ENCODE measurements at regions of chr16 and their contacts with region 1.

Region 1: DNA sequence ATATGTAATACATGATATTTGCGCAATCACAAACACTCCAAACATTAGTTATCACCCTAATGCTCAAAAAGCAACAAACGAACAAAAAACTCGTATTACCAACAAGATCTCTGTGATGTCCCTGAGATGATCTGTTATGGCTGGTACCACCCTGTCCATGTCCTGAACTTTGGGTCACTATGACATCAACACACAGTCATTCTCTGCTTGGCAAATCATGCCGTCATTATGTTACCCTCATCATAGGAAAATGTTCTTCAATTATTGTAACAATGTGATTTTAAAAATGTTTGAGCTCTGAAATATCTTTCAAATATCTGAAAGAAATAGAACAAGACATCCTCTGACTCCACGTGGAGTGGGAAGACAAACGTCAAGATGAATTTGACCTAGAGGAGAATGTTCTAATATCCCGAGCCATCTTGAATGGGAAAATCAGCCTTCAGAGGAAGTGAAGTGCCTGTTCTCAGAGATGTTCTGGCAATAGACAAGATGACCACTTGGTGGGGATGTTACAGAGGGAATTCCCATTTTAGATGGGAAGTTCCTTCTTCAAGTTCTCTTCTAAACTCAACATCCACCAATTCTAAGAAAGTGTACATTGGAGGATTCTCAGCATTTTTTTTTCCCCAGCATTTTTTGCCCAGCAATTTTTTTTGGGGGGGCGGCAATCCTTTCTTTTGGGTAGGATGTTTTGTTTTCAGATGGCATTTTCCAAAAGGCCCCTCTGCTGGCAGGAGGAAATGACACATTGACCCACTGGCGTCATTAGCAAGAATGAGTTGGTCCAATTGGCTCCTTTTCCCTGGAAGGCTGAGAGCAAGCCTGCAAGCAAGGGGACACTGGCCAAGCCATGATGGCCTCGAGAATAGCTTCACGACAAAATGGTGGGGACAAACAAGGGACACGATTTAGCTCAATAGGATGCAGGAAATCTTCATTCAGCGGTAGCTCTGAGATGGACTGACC is 3.7 kb upstream of the HSD17B2 start:
- DNase-seq: peak; percentile 71
- ATAC-seq: no peak
- H3K4me3 ChIP-seq: no peak overlapping the region
- H3K27ac ChIP-seq: peak overlapping the region; percentile 37; the same call in 1 of the 2 replicates
- H3K4me1 ChIP-seq: peaks cover 34% of the 10 kb centered on the region
- H3K27me3 ChIP-seq: peaks cover 1% of the 10 kb centered on the region; the same call in 1 of the 2 replicates
- CTCF ChIP-seq: peak; percentile 74

Region 2: DNA sequence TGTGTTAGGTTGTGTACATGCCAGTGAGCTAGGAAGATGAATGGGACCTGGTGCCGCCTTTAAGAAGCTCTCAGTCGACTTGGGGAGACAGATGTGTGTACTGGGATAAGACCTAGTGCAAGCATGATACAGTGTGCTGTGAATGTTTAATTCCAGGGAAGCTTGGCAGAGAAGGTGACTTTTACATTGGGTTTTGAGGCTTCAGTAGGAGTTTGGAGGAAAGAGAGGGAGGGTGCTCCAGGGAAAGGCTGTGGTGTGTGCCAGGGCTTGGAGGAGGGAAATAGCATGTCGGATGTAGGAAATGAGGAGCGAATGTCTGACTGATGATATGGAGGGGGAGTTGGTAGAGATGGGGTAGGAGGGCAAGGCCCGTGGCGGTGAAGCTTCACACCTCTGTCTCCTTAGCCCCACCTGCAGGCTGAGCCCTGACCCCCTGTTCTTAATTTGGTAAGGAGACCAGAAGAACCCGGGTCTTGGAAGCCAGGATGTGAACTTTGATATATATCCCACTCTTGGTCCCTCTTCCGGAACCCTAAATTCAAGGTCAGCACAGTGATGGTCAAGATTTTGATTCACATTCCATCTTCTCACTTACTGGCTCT is 175.7 kb before region 1 on chr16:
- CTCF ChIA-PET with region 1: no interaction called
- POLR2A ChIA-PET with region 1: no interaction called
- intact Hi-C with region 1: no loop called
- DNase-seq: no peak
- ATAC-seq: no peak
- H3K4me3 ChIP-seq: no peak overlapping the region
- H3K27ac ChIP-seq: no peak overlapping the region
- H3K4me1 ChIP-seq: no peaks in the 10 kb centered on the region
- H3K27me3 ChIP-seq: no peaks in the 10 kb centered on the region
- CTCF ChIP-seq: no peak

Region 3: DNA sequence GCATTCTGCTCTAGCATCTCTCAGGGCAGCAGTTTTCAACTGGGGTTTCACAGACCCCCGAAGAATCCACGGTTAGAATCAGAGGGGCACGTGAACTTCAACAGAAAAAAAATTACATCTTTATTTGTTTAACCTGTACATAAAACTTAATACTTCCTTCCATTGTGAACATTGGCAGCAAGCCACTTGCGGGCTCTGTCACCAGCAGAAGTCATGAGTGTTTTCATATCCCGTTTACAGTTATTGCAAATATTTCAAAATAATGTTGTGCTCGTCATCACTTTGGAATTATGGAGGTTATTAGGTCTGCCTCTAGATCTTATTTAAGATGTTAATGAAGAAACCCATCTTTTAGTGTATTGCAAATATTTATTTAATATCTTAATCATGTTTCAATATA is 129.9 kb before region 1 on chr16:
- CTCF ChIA-PET with region 1: no interaction called
- POLR2A ChIA-PET with region 1: no interaction called
- intact Hi-C with region 1: loop called (anchors 10 kb)
- DNase-seq: peak; percentile 85
- ATAC-seq: peak; percentile 86
- H3K4me3 ChIP-seq: no peak overlapping the region
- H3K27ac ChIP-seq: peak overlapping the region; percentile 31; the same call in 1 of the 2 replicates
- H3K4me1 ChIP-seq: peaks cover 16% of the 10 kb centered on the region
- H3K27me3 ChIP-seq: no peaks in the 10 kb centered on the region
- CTCF ChIP-seq: no peak

Region 4: DNA sequence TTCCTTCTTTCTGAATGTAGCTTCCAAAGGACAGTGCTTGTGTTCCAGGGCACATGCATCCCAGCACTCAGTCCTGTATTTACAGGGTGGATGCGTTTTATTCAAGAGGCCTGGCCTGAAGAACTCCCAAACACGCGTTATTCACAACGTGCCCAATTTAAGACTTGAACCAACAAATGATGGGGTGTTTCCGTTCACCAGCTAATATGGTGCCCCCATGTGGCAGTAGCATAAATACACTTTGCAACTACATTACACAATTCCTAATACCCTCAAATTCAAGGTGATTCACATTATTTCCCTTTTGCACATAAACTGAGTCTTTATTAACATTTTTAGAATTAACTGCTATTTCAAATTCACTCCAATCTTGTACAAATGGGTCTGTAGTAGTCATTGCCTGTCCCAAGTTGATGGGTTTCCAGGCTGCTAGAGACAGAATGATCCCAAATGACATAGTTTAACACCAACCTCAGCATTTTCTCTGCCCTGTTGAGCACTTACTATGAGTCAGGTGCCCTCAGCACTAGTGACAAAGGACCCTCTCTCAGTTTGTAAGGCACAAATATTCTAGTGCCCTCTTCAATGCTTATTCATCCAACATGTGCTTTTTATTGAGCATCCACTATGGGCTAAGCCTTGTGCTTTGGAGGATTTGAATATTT is 30.6 kb after region 1 on chr16:
- CTCF ChIA-PET with region 1: no interaction called
- POLR2A ChIA-PET with region 1: no interaction called
- intact Hi-C with region 1: loop called (anchors 1 kb)
- DNase-seq: peak; percentile 37
- ATAC-seq: no peak
- H3K4me3 ChIP-seq: no peak overlapping the region
- H3K27ac ChIP-seq: no peak overlapping the region
- H3K4me1 ChIP-seq: peaks cover 15% of the 10 kb centered on the region
- H3K27me3 ChIP-seq: no peaks in the 10 kb centered on the region
- CTCF ChIP-seq: peak; percentile 69

Region 5: DNA sequence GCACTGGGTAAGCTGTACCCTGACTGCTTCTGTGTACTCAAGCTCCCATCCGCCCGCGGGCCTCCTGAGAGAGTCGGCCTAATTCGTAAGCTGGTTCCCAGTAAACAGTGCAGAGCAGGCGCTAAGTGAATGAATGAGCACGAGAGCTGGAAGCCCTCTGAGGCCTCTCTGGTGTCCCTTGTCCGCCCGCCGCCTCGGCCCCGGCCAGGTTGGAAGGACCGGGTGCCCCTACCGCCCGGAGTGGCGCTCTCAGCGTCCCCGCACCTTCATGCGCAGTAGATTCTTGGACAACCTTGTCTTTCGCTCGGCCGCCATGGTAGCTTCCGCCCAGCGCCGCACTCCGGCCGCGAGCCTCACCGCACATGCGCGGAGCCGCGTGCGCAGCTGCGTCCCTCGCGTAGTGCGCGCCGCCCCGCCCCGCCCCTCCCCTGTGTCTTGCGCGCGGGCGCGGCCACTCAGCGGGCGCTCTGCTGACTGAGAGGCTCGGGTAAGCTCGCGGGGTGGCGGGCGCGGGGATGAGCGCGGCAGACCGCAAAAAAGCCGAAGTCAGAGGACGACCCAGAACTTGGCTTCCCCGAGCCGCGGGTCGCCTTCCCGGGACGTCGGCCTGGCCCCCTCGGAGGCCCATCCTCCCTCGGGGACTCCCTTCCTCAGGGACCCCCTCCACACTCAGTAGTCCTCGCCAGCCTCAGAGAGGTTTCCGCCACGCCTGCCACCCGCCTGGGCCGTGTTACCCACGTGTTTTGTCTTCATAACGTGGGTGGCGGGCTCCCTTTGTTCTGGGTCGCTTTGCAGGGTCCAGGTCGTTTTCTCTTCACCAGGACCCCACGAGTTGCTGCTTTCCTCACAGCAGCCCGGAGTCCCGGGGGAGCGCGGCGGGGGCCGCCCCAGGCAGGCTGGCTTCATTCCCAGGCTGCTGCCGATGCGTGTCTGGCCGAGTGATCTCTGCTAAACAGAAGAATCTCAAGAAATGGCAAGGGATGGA is 138.8 kb after region 1 on chr16 and contains the start of gene MPHOSPH6:
- CTCF ChIA-PET with region 1: no interaction called
- POLR2A ChIA-PET with region 1: no interaction called
- intact Hi-C with region 1: loop called (anchors 5 kb)
- DNase-seq: peak; percentile 84
- ATAC-seq: peak; percentile 97
- H3K4me3 ChIP-seq: peak within 1 kb of the TSS; percentile 74
- H3K27ac ChIP-seq: no peak within 1 kb of the TSS; the same call in 1 of the 2 replicates
- H3K4me1 ChIP-seq: peaks cover 7% of the 10 kb centered on the region
- H3K27me3 ChIP-seq: peaks cover 23% of the 10 kb centered on the region; the same call in 1 of the 2 replicates
- CTCF ChIP-seq: no peak
- total RNA-seq, gene MPHOSPH6: 23.5 and 28.9 TPM in 2 replicates